CD4-positive, alpha-beta T cell (primary cell): ENCODE measurements at regions of chr5 and their contacts with region 1.

Region 1: DNA sequence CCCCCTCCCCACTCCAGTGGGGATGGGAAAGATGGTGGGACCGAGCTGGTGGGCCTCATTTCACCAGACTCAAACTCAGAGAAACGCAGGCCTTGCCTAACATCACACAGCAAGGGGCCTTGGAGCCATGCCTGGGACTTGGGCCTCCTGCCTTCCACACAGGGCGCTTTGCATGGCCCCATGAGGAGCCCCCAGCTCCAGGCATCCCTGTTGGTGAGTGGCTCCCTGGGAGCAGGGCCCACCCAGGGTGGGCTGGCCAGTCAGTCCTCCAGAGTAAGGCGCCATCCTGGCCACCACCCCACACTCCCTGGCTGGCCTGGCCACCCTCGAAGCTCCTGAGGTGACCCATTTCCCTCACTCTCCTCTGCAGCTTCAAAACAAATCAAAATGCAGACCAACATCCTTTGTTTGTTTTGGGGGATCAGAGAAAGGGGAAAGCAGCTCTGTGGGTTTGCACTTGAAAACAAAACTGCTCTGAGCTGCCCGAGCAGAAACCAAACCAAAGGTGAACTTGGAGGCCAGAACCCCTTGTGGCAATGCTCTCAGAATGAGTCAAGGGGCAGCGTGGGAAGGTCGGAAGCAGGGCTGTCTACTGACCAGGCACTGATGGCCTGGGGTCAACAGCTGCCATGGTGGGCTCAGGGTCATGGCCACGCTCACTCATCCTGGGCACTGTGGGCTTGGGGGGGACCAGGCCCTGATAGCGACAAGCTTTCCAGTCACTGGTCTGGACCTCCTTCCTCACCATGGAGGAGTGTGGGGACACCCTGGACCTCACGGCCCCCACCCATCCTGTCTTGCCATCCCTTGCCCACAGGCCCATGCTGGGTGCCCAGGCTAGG is 37.0 kb upstream of the VDAC1 start:
- DNase-seq: peak in 1 of 14 experiments; percentile 10
- ATAC-seq: no peak
- H3K4me3 ChIP-seq: no peak overlapping the region
- H3K4me3 Mint-ChIP-seq: peak overlapping the region; percentile 30
- H3K27ac ChIP-seq: peak overlapping the region in 1 of 2 donors; percentile 36
- H3K27ac Mint-ChIP-seq: peak overlapping the region; percentile 47
- H3K4me1 ChIP-seq: peaks cover 60% of the 10 kb centered on the region
- H3K4me1 Mint-ChIP-seq: peaks cover 78% of the 10 kb centered on the region
- H3K27me3 ChIP-seq: no peaks in the 10 kb centered on the region
- H3K27me3 Mint-ChIP-seq: no peaks in the 10 kb centered on the region
- CTCF ChIP-seq: no peak

Region 2: GRCh38 chr5:134063188-134063820 is 21.5 kb after region 1 on chr5:
- CTCF ChIA-PET with region 1: interaction called, 31 read pairs
- POLR2A ChIA-PET with region 1: interaction called, 18 read pairs
- intact Hi-C with region 1: loop called in 1 of 2 experiments (anchors 2 kb)
- DNase-seq: no peak
- ATAC-seq: no peak
- H3K4me3 ChIP-seq: no peak overlapping the region
- H3K4me3 Mint-ChIP-seq: no peak overlapping the region
- H3K27ac ChIP-seq: no peak overlapping the region
- H3K27ac Mint-ChIP-seq: no peak overlapping the region
- H3K4me1 ChIP-seq: peaks cover 14% of the 10 kb centered on the region
- H3K4me1 Mint-ChIP-seq: peaks cover 24% of the 10 kb centered on the region
- H3K27me3 ChIP-seq: no peaks in the 10 kb centered on the region
- H3K27me3 Mint-ChIP-seq: no peaks in the 10 kb centered on the region
- CTCF ChIP-seq: no peak

Region 3: GRCh38 chr5:134086943-134087305 is 45.1 kb after region 1 on chr5:
- CTCF ChIA-PET with region 1: interaction called, 23 read pairs
- POLR2A ChIA-PET with region 1: interaction called, 14 read pairs
- intact Hi-C with region 1: no loop called
- DNase-seq: peak; percentile 62 to 92 (median 81)
- ATAC-seq: peak; percentile 74
- H3K4me3 ChIP-seq: no peak overlapping the region
- H3K4me3 Mint-ChIP-seq: peak overlapping the region; percentile 76
- H3K27ac ChIP-seq: peak overlapping the region; percentile 53 to 61
- H3K27ac Mint-ChIP-seq: peak overlapping the region; percentile 95
- H3K4me1 ChIP-seq: peaks cover 90% of the 10 kb centered on the region
- H3K4me1 Mint-ChIP-seq: peaks cover 88% of the 10 kb centered on the region
- H3K27me3 ChIP-seq: no peaks in the 10 kb centered on the region
- H3K27me3 Mint-ChIP-seq: no peaks in the 10 kb centered on the region
- CTCF ChIP-seq: no peak

Region 4: GRCh38 chr5:134119720-134120119 is 77.9 kb after region 1 on chr5:
- CTCF ChIA-PET with region 1: interaction called, 51 read pairs
- POLR2A ChIA-PET with region 1: interaction called, 138 read pairs
- intact Hi-C with region 1: no loop called
- DNase-seq: peak in 1 of 14 experiments; percentile 58
- ATAC-seq: no peak
- H3K4me3 ChIP-seq: peak overlapping the region; percentile 92
- H3K4me3 Mint-ChIP-seq: peak overlapping the region; percentile 95
- H3K27ac ChIP-seq: peak overlapping the region; percentile 49 to 96
- H3K27ac Mint-ChIP-seq: peak overlapping the region; percentile 98
- H3K4me1 ChIP-seq: peaks cover 76% of the 10 kb centered on the region
- H3K4me1 Mint-ChIP-seq: peaks cover 66% of the 10 kb centered on the region
- H3K27me3 ChIP-seq: no peaks in the 10 kb centered on the region
- H3K27me3 Mint-ChIP-seq: no peaks in the 10 kb centered on the region
- CTCF ChIP-seq: no peak

Region 5: DNA sequence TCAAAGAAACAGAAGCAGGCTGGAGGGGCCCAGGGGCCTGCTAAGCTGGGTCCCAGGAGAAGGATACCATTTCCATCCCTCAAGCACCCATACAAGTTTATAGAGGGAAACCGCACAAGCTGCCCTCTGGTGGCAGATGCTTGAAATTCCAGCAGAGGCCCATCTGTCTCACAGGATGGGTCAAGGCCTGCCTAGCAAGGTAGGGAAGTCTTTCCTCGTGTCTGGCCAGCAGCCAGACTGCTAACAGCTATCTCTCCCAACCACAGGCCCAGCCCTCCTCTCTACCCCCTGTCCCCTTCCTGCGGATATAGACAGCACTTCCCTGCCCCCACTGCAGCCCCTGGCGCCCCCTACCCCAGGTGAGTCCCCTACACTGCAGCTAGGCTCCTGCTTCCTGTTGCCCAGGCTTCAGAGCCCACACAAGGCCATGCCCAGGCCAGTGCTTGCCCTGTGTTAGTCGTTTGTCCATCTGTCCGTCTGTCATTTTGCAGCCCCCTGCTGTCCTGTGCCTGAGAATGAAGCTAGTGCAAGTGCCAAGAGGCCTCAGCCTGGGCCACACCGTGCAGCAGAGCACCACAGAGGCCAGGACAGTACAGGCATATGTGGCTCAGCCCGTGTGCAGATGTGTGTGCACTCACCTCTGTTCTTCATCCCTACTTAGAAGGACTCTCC is 98.9 kb after region 1 on chr5:
- CTCF ChIA-PET with region 1: interaction called, 114 read pairs
- POLR2A ChIA-PET with region 1: interaction called, 350 read pairs
- intact Hi-C with region 1: loop called in 1 of 2 experiments (anchors 1 kb)
- DNase-seq: peak in 13 of 14 experiments; percentile 43 to 81 (median 54)
- ATAC-seq: peak; percentile 49
- H3K4me3 ChIP-seq: no peak overlapping the region
- H3K4me3 Mint-ChIP-seq: peak overlapping the region; percentile 36
- H3K27ac ChIP-seq: peak overlapping the region; percentile 57 to 96
- H3K27ac Mint-ChIP-seq: peak overlapping the region; percentile 98
- H3K4me1 ChIP-seq: peaks cover 79% of the 10 kb centered on the region
- H3K4me1 Mint-ChIP-seq: peaks cover 80% of the 10 kb centered on the region
- H3K27me3 ChIP-seq: no peaks in the 10 kb centered on the region
- H3K27me3 Mint-ChIP-seq: no peaks in the 10 kb centered on the region
- CTCF ChIP-seq: peak; percentile 72